ENCODE measurements at regions of chr3 and their contacts with region 1.

Region 1: DNA sequence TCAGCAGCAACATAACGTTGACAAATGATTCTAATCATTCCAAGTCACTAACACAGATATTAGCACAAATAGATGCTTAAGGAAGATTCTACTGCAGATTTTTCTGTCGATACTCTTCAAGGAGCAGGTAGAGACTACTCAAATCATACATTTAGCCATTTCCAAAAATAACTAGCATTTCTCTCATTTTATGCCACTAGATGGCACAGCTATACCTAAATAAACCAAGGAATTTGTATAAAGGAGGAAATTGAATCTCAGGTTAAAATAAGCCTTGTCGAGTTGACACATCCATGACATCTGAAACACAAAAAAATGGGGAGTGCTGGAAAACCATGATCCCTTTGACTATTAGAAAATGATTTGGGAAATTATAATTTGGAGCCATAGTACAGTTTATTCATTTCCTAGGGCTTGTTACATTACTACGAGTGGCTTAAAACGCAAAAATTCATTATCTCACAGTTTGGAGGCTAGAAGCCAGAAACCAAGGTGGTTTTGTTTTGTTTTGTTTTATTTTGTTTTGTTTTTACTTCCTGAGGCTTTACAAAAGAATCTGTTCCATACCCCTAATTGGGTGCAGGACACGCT is 59.5 kb upstream of the STRIT1 start:
- DNase-seq: no peak
- H3K4me3 ChIP-seq: no peak overlapping the region
- H3K27ac ChIP-seq: no peak overlapping the region
- H3K4me1 ChIP-seq: no peaks in the 10 kb centered on the region
- H3K27me3 ChIP-seq: no peaks in the 10 kb centered on the region
- CTCF ChIP-seq: peak in 1 of 3 donors; percentile 34
- EP300 ChIP-seq: no peak
- POLR2A ChIP-seq: no peak

Region 2: GRCh38 chr3:155034786-155035185 is 318.2 kb before region 1 on chr3:
- intact Hi-C with region 1: no loop called
- DNase-seq: no peak
- H3K4me3 ChIP-seq: no peak overlapping the region
- H3K27ac ChIP-seq: no peak overlapping the region
- H3K4me1 ChIP-seq: no peaks in the 10 kb centered on the region
- H3K27me3 ChIP-seq: no peaks in the 10 kb centered on the region
- CTCF ChIP-seq: no peak
- EP300 ChIP-seq: no peak
- POLR2A ChIP-seq: no peak

Region 3: DNA sequence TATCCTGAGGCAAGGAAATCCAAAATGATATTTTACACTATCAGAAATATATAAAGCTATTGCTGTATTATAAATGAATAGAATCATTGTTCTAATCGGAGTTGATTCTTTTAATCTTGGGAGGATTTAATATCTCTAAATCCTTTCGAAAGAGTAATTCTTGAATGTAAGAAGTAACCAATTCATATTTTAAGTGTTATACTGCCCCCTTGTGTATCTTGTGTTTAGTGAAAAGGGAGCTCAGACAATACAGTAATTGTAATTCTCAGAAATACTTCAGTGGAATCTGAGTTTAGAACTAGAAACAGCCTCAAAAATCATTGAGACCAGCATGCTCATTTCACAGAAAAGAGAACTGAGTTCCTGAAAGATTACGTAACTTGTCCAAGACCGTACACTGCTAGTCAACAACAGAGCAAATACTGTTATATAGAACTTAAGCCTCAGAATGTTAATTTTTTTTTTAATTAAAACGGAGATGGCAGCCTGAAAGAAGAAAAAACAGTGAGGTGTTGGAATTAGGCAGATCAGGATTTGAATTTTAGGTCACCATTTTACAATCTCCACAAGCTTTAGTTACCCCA is 349.0 kb after region 1 on chr3:
- intact Hi-C with region 1: loop called in 3 of 4 experiments (anchors 5 to 10 kb)
- DNase-seq: no peak
- H3K4me3 ChIP-seq: no peak overlapping the region
- H3K27ac ChIP-seq: no peak overlapping the region
- H3K4me1 ChIP-seq: no peaks in the 10 kb centered on the region
- H3K27me3 ChIP-seq: no peaks in the 10 kb centered on the region
- CTCF ChIP-seq: peak; percentile 27 to 59 (median 53)
- EP300 ChIP-seq: no peak
- POLR2A ChIP-seq: no peak